PC-3 (cell line): ENCODE measurements at regions of chr19 and their contacts with region 1.

Region 1: DNA sequence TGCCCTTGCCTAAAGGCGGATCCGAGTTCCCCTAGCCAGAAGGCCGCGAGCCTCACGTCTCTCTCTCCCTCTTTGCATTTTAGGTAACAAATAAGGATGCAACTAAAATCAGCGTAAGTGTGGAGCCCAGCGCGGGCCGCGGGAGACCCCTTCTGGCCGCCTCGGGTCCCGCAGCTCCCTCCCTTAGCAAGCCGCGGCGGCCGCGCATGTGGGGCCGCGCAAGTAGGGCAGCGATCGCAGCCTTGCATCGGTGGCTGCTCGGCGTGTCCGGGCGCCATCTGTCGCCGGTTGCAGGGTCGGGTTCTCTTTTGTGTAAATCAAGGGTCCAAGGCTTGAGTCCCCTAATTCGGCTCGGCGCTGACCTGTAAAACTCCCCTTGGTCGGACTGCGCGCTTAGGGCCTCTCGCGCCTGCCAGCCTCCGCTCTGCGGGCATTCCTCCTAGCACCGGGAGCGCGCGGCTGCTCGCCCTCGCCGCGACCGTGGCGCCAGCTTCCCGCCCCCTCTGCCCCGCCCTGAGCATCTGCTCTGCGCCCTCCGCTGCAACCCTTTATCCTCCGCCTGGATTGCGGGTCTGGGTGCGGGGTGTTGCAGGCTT is 2.7 kb downstream of the VSTM2B start:
- DNase-seq: peak; percentile 63
- ATAC-seq: peak; percentile 89
- H3K4me3 ChIP-seq: peak overlapping the region; percentile 54
- H3K27ac ChIP-seq: no peak overlapping the region
- H3K4me1 ChIP-seq: no peaks in the 10 kb centered on the region
- H3K27me3 ChIP-seq: peaks cover 36% of the 10 kb centered on the region
- CTCF ChIP-seq: peak; percentile 79

Region 2: GRCh38 chr19:29467824-29468401 is 60.5 kb before region 1 on chr19:
- CTCF ChIA-PET with region 1: interaction called, 7 read pairs
- POLR2A ChIA-PET with region 1: no interaction called
- intact Hi-C with region 1: loop called (anchors 5 kb)
- DNase-seq: peak; percentile 54
- ATAC-seq: peak; percentile 69
- H3K4me3 ChIP-seq: no peak overlapping the region
- H3K27ac ChIP-seq: no peak overlapping the region
- H3K4me1 ChIP-seq: no peaks in the 10 kb centered on the region
- H3K27me3 ChIP-seq: no peaks in the 10 kb centered on the region; the same call in 1 of the 2 replicates
- CTCF ChIP-seq: peak; percentile 67